ENCODE measurements at regions of chrX and their contacts with region 1.

Region 1: GRCh38 chrX:12946838-12947544 is 27.9 kb upstream of the TMSB4X start:
- DNase-seq: peak; percentile 36 to 86 (median 67)
- ATAC-seq: peak; percentile 20 to 39 (median 30)
- H3K4me3 ChIP-seq: no peak overlapping the region
- H3K4me3 Mint-ChIP-seq: peak overlapping the region; percentile 40 to 82 (median 54)
- H3K27ac ChIP-seq: peak overlapping the region; percentile 94
- H3K27ac Mint-ChIP-seq: peak overlapping the region; percentile 92 to 96
- H3K4me1 ChIP-seq: peaks cover 40 to 51% of the 10 kb centered on the region in 2 experiments
- H3K4me1 Mint-ChIP-seq: peaks cover 54 to 58% (median 55%) of the 10 kb centered on the region in 3 donors
- H3K27me3 ChIP-seq: no peaks in the 10 kb centered on the region
- H3K27me3 Mint-ChIP-seq: peaks cover 0 to 27% of the 10 kb centered on the region in 2 donors

Region 2: DNA sequence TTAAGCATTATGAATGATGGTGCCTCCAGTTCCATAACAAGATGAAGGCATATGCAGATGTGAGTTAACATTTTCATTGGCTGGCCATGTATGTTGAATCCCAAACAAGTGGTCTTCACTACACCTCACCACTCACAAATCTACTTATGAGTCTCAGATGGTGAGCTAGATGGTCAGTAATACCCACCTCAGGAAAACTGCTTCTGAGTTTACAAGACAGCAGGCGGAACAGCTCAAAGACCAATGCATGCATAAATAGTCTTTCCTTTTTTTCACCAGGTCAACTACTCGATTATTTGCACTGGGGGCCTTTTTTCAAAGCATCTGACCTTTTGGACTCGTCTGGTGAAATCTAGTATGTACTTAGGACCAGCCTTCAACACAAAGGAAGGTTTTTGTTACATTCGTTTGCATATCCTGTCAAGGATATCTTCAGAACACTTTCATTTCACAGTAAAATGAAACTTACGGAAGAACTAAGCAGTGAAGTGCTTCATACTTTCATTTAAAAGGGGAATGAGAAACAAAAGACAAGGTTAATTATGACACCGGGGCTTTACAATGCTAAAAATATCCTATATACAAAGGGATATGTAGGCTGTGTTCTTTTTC is 103.2 kb before region 1 on chrX:
- CTCF ChIA-PET with region 1: interaction called in 1 of 2 experiments, 11 read pairs
- POLR2A ChIA-PET with region 1: no interaction called
- DNase-seq: peak in 1 of 35 experiments; percentile 2
- ATAC-seq: peak in 2 of 4 experiments; percentile 44 to 67
- H3K4me3 ChIP-seq: peak overlapping the region; percentile 15 to 51
- H3K4me3 Mint-ChIP-seq: peak overlapping the region; percentile 42 to 71 (median 64)
- H3K27ac ChIP-seq: peak overlapping the region; percentile 38
- H3K27ac Mint-ChIP-seq: peak overlapping the region; percentile 85 to 88
- H3K4me1 ChIP-seq: no peaks in the 10 kb centered on the region
- H3K4me1 Mint-ChIP-seq: peaks cover 8 to 14% (median 9%) of the 10 kb centered on the region in 3 donors
- H3K27me3 ChIP-seq: peaks cover 0 to 5% of the 10 kb centered on the region in 2 experiments
- H3K27me3 Mint-ChIP-seq: peaks cover 6 to 9% of the 10 kb centered on the region in 2 donors

Region 3: DNA sequence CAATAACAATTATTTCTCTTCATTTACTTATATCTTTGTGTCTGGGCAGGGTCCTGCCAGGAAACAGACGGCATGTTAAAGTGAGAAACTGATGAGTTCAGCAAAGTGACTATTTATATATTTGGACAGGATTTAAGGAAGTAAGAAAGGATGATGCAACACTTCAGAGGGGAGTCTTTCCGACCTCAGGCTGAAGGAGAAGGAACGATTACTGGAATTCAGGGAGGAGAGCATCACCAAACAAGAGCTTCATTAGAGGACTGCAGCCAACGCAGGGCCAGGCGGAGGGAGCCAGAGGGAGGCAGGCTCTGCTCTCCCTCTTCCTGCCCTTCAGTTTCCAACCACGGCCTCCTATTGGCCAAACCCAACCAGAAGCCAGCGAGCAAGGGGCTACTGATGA is 81.6 kb before region 1 on chrX:
- CTCF ChIA-PET with region 1: no interaction called
- POLR2A ChIA-PET with region 1: no interaction called
- DNase-seq: no peak
- ATAC-seq: no peak
- H3K4me3 ChIP-seq: no peak overlapping the region
- H3K4me3 Mint-ChIP-seq: no peak overlapping the region
- H3K27ac ChIP-seq: no peak overlapping the region
- H3K27ac Mint-ChIP-seq: no peak overlapping the region
- H3K4me1 ChIP-seq: no peaks in the 10 kb centered on the region
- H3K4me1 Mint-ChIP-seq: peaks cover 0 to 6% (median 2%) of the 10 kb centered on the region in 3 donors
- H3K27me3 ChIP-seq: peaks cover 0 to 3% of the 10 kb centered on the region in 2 experiments
- H3K27me3 Mint-ChIP-seq: peaks cover 3 to 20% of the 10 kb centered on the region in 2 donors

Region 4: DNA sequence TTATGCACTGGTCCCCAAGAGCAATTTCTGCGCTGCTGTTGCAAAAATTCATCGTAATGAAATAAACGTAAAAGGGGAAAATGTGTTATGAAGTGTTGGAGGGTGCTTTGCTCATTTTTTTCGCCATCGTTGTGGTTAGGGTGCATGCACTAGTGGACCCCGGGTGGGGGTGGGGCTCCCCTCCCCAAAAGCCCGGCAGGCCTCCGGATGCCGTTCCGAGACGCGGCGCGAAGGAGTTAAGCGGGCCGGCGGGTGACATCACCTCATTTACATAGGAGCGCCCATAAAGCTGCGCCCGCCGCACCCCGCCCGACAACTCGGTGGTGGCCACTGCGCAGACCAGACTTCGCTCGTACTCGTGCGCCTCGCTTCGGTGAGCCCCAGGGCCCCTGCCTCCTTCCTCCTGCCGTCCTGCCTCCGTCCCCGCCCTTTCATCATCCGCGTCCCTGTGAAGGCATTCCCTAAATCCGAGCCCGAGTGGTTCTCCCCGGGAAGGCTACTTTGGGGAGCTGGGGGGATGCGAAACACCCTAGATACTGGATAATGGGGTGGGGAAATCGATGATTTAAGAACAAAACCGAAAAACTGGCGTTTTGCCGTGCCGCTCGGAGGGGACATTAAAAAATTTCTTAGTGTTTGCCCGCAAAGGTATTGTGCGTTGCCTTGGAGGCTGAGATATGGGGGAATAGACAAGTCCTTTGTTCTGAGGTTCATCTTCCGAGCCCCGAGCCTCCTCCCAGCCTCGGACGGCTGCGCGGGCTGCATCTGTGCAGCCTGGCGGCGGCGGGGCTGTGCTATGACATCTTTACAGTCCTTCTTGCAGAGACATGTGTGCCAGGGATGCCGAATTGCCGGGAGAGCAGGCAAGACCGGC is 28.0 kb after region 1 on chrX and contains the start of gene TMSB4X:
- CTCF ChIA-PET with region 1: interaction called, 8 to 44 read pairs
- POLR2A ChIA-PET with region 1: interaction called, 7 to 12 read pairs
- DNase-seq: peak; percentile 60 to 85 (median 78)
- ATAC-seq: peak; percentile 52 to 59 (median 55)
- H3K4me3 ChIP-seq: peak within 1 kb of the TSS; percentile 90 to 98
- H3K4me3 Mint-ChIP-seq: peak within 1 kb of the TSS; percentile 79 to 97 (median 94)
- H3K27ac ChIP-seq: peak within 1 kb of the TSS; percentile 94
- H3K27ac Mint-ChIP-seq: peak within 1 kb of the TSS; percentile 93 to 98
- H3K4me1 ChIP-seq: peaks cover 26% of the 10 kb centered on the region in 2 experiments
- H3K4me1 Mint-ChIP-seq: peaks cover 34 to 76% (median 43%) of the 10 kb centered on the region in 3 donors
- H3K27me3 ChIP-seq: no peaks in the 10 kb centered on the region
- H3K27me3 Mint-ChIP-seq: peaks cover 0 to 4% of the 10 kb centered on the region in 2 donors
- total RNA-seq, gene TMSB4X: 5,030 to 6,201 (median 5,880) TPM

Region 5: DNA sequence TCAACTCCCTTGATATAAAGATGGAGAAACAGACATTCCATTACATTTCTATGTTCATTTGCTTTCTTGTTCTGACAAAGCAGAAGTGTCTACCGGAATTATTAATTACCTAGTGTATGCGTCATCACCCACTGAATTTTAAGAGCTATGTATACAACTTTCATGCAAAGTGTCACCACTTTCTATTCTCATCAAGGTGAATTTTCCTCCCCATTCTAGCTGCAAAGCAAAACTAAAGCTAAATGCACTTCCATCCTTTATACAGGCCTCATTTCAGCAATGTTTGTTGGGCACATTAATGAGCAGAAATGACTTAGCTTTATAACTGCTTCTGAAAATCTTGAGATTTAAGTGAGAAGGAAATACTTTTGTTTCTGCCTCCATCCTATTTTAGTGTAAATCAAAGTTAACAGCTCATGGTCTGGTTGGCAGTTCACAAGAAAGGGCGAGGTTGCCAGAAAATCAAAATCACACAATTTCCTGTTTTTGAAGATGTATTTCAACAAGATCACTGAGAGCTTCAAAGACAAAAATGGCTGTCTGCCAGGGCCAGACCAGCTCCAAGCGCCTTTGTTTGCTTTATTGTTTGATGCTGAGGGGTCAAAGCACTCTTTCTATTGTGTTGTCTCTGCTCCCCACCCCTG is 104.7 kb after region 1 on chrX:
- CTCF ChIA-PET with region 1: interaction called, 9 to 15 read pairs
- POLR2A ChIA-PET with region 1: interaction called, 3 to 4 read pairs
- DNase-seq: peak in 32 of 35 experiments; percentile 18 to 74 (median 43)
- ATAC-seq: peak; percentile 76 to 90 (median 86)
- H3K4me3 ChIP-seq: no peak overlapping the region
- H3K4me3 Mint-ChIP-seq: peak overlapping the region; percentile 3 to 60 (median 50)
- H3K27ac ChIP-seq: peak overlapping the region; percentile 91
- H3K27ac Mint-ChIP-seq: peak overlapping the region; percentile 87 to 98
- H3K4me1 ChIP-seq: peaks cover 27 to 55% of the 10 kb centered on the region in 2 experiments
- H3K4me1 Mint-ChIP-seq: peaks cover 79 to 86% (median 82%) of the 10 kb centered on the region in 3 donors
- H3K27me3 ChIP-seq: no peaks in the 10 kb centered on the region
- H3K27me3 Mint-ChIP-seq: peaks cover 0 to 12% of the 10 kb centered on the region in 2 donors

Region 6: GRCh38 chrX:13087322-13088155 is 140.5 kb after region 1 on chrX:
- CTCF ChIA-PET with region 1: interaction called, 22 to 46 read pairs
- POLR2A ChIA-PET with region 1: interaction called, 3 to 9 read pairs
- DNase-seq: peak in 34 of 35 experiments; percentile 30 to 91 (median 64)
- ATAC-seq: peak; percentile 69 to 81 (median 75)
- H3K4me3 ChIP-seq: peak overlapping the region in 1 of 2 donors; percentile 19
- H3K4me3 Mint-ChIP-seq: peak overlapping the region; percentile 77 to 85 (median 80)
- H3K27ac ChIP-seq: peak overlapping the region; percentile 100
- H3K27ac Mint-ChIP-seq: peak overlapping the region; percentile 89 to 99
- H3K4me1 ChIP-seq: peaks cover 49 to 74% of the 10 kb centered on the region in 2 experiments
- H3K4me1 Mint-ChIP-seq: peaks cover 92 to 95% (median 94%) of the 10 kb centered on the region in 3 donors
- H3K27me3 ChIP-seq: no peaks in the 10 kb centered on the region
- H3K27me3 Mint-ChIP-seq: peaks cover 0 to 4% of the 10 kb centered on the region in 2 donors

Region 7: DNA sequence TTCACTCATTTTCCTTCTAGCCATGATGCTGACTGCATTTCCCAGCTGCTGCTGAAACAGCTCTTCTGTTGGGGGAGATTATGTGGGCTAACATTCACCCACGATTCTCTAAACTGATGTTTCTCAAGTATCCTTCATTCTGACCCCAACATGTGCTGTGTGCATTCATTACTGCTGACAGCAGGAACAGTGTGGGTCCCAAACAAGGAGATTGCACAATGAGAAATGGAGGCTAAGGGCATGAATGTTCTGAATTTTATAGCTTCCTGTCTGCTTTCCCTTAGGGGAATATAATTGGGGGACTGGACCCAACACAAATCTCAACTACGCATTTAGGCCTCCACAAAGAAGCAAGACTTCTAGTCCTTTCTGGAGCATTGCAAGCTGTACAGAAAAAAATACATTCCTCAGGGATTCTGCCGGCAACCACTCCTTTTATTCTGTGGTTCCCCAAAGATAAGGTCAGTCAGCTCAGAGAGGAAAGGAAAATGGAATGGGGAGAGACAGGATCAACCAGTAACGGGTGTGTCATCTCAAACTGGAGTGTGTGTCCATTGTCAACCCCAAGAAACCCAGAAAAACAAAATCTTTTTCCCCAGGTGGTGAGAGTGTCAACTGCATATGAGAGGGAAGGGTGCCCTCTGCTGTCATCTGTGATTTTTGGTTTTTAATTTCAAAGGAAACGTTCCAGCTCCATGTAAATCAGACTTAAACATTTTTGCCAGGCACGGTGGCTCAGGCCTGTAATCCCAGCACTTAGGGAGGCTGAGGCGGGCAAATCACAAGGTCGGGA is 540.9 kb after region 1 on chrX:
- CTCF ChIA-PET with region 1: interaction called, 50 to 92 read pairs
- POLR2A ChIA-PET with region 1: interaction called in 1 of 2 experiments, 4 read pairs
- DNase-seq: peak in 30 of 35 experiments; percentile 3 to 75 (median 28)
- ATAC-seq: peak; percentile 58 to 84 (median 66)
- H3K4me3 ChIP-seq: no peak overlapping the region
- H3K4me3 Mint-ChIP-seq: no peak overlapping the region
- H3K27ac ChIP-seq: peak overlapping the region; percentile 57
- H3K27ac Mint-ChIP-seq: peak overlapping the region; percentile 77 to 84
- H3K4me1 ChIP-seq: peaks cover 5 to 25% of the 10 kb centered on the region in 2 experiments
- H3K4me1 Mint-ChIP-seq: peaks cover 19 to 46% (median 28%) of the 10 kb centered on the region in 3 donors
- H3K27me3 ChIP-seq: no peaks in the 10 kb centered on the region
- H3K27me3 Mint-ChIP-seq: peaks cover 0 to 29% of the 10 kb centered on the region in 2 donors

Measured in T-cell (primary cell).